ENCODE measurements at regions of chr4 and their contacts with region 1.

Region 1: DNA sequence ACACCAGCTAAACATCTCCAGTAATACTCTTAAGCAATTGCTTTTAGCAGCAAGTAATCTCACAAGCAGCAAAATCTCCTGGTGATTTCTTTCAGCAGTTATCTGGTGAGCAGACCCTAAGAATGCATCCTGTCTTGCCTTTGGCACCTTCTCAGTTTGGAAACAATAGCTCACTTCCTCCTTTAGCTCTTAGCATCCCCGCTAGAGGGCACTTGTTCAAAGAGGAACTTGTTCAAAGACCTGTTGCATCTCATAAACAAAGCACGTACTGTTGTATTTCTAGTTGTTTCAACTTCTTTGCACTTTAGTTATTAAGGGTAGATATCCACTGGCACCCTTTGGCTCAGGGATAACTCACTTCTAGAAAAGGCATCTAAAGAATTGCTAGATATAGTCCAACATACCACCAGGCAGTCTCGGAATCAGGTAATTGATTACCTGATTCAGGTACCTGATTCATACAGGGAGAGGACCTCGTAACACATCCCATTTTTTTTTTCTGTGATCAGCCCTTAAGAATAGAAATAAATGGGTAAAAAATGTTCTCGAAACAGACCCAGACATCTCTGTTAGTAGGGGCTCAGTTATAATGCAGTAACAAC is 81.9 kb upstream of the QRFPR start:
- DNase-seq: peak; percentile 78
- H3K4me3 ChIP-seq: no peak overlapping the region
- H3K27ac ChIP-seq: no peak overlapping the region
- H3K4me1 ChIP-seq: no peaks in the 10 kb centered on the region
- H3K27me3 ChIP-seq: peaks cover 0 to 9% of the 10 kb centered on the region in 2 experiments
- CTCF ChIP-seq: peak; percentile 63 to 67
- POLR2A ChIP-seq: no peak

Region 2: DNA sequence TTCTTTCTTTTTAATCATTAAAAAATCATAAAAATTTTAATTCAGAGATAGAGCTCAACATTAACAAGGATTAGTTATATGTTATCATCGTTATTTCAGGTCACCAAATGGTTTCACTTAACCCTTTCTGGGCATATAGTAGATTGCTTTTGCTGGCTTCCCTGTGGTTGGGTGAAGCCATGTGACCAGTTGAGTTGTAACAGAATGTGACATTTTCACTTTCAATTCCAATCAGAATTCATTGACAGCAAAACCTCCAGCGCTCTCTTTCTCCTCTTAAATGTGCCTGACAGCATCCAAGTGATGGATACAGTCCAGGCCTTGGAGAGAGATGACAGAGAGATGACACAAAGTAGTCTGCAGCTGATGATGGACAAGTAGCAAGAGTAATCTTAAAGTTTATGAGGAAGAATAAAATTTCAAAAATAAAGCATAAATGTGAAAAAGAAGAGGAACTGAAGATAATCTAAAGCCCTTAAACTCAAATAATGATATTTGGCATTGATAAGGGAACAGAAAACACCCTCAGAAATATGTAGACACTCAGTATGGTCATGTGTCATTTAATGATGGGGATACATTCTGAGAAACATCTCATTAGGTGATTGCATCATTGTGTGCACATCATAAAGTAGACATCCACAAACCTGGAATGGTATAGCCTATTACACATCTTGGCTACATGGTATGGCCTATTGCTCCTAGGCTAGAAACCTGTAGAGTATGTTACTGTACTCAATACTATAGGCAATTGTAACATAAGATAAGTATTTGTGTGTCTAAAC is 10.4 kb after region 1 on chr4:
- CTCF ChIA-PET with region 1: interaction called, 12 read pairs
- POLR2A ChIA-PET with region 1: no interaction called
- dilution Hi-C with region 1: no loop called
- intact Hi-C with region 1: no loop called
- DNase-seq: no peak
- H3K4me3 ChIP-seq: no peak overlapping the region
- H3K27ac ChIP-seq: no peak overlapping the region
- H3K4me1 ChIP-seq: no peaks in the 10 kb centered on the region
- H3K27me3 ChIP-seq: no peaks in the 10 kb centered on the region
- CTCF ChIP-seq: no peak
- POLR2A ChIP-seq: no peak

Region 3: GRCh38 chr4:121484633-121485032 is 21.9 kb after region 1 on chr4:
- CTCF ChIA-PET with region 1: interaction called, 14 read pairs
- POLR2A ChIA-PET with region 1: interaction called, 3 read pairs
- dilution Hi-C with region 1: no loop called
- intact Hi-C with region 1: no loop called
- DNase-seq: peak; percentile 47
- H3K4me3 ChIP-seq: no peak overlapping the region
- H3K27ac ChIP-seq: no peak overlapping the region
- H3K4me1 ChIP-seq: no peaks in the 10 kb centered on the region
- H3K27me3 ChIP-seq: peaks cover 0 to 17% of the 10 kb centered on the region in 2 experiments
- CTCF ChIP-seq: peak; percentile 68 to 78
- POLR2A ChIP-seq: no peak

Region 4: DNA sequence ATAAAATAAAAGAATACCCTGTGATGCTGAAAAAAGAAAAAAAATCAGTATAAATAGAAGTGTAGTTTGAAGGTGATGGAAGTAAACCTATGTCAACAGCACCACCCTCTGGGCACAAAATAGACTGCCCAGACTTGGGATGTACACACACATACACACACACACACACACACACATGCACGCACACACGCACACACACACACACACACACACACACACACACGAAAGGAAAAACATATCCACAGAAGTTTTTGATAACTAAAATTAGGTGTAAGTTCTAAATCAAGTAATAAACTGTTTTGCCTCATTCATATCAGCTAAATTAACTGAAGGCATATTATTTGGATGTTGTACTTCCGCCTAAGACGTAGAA is 193.5 kb after region 1 on chr4:
- CTCF ChIA-PET with region 1: interaction called, 20 read pairs
- POLR2A ChIA-PET with region 1: no interaction called
- dilution Hi-C with region 1: no loop called
- intact Hi-C with region 1: loop called (anchors 1 kb)
- DNase-seq: peak; percentile 66
- H3K4me3 ChIP-seq: no peak overlapping the region
- H3K27ac ChIP-seq: no peak overlapping the region
- H3K4me1 ChIP-seq: no peaks in the 10 kb centered on the region
- H3K27me3 ChIP-seq: no peaks in the 10 kb centered on the region
- CTCF ChIP-seq: peak; percentile 30 to 56
- POLR2A ChIP-seq: no peak